Activated CD4-positive, alpha-beta memory T cell treated with anti-CD3 and anti-CD28 coated beads, Interleukin-2, amount 10 ng/mL, durations not matched to agents 7 days and 5 days (primary cell): ENCODE measurements at regions of chr10 and their contacts with region 1.

Region 1: GRCh38 chr10:88270871-88271713 is 312.0 kb downstream of the RNLS start:
- DNase-seq: peak; percentile 75
- H3K4me3 Mint-ChIP-seq: peak overlapping the region; percentile 47
- H3K27ac Mint-ChIP-seq: peak overlapping the region; percentile 91
- H3K4me1 Mint-ChIP-seq: peaks cover 61% of the 10 kb centered on the region
- H3K27me3 Mint-ChIP-seq: no peaks in the 10 kb centered on the region

Region 2: DNA sequence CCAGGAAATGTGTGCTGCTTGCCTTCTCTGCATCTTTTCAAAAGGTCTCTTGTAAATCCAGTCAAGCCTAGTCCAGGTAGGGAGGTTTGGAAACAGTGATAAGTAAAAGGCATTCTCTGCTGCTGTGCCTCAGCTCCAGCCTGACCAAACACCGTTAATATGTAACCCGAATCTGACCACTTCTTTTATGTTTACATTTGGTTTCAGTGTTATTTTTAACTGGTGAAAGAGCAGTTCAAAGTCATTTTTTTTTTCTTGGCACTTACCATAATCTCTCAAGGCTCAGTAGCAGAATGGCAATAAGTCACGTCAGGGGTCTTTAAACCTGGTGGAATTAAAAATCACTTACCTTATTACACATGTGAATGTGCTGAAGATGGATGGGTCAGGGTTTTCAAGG is 190.9 kb before region 1 on chr10:
- CTCF ChIA-PET with region 1: no interaction called
- POLR2A ChIA-PET with region 1: no interaction called
- DNase-seq: no peak
- H3K4me3 Mint-ChIP-seq: no peak overlapping the region
- H3K27ac Mint-ChIP-seq: no peak overlapping the region
- H3K4me1 Mint-ChIP-seq: peaks cover 11% of the 10 kb centered on the region
- H3K27me3 Mint-ChIP-seq: peaks cover 22% of the 10 kb centered on the region

Region 3: DNA sequence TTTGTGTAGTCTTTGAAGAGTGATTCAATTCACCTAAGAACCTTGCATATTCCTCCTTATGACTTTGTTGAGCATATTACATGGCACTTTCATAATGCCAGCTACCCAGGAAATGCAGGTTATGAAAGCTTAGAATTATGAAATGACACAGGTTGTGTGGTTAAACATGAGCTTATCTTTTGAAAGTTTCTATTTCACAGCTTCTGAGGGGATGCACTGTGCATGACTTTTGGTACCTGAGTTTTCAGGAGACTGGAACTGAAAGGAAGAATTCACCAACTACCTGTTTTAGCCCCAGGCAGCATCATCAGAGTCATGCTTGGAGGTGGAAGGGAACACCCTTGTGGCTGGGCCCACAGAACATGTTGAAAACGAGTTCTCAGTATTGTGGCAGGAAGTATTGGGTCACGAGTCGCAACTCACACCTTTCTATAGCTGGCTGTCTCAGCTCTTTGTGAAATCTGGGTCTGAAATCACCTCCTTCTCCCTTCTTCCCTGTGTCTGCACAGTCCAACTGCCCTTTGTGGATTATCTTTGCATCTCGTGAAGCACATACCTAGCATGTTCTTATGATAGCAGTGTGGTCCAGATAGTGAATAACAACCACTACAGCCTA is 179.5 kb before region 1 on chr10:
- CTCF ChIA-PET with region 1: interaction called, 7 read pairs
- POLR2A ChIA-PET with region 1: interaction called, 29 read pairs
- DNase-seq: peak; percentile 85
- H3K4me3 Mint-ChIP-seq: no peak overlapping the region
- H3K27ac Mint-ChIP-seq: peak overlapping the region; percentile 85
- H3K4me1 Mint-ChIP-seq: peaks cover 38% of the 10 kb centered on the region
- H3K27me3 Mint-ChIP-seq: peaks cover 28% of the 10 kb centered on the region

Region 4: GRCh38 chr10:88152720-88153119 is 118.4 kb before region 1 on chr10:
- CTCF ChIA-PET with region 1: interaction called, 3 read pairs
- POLR2A ChIA-PET with region 1: interaction called, 11 read pairs
- DNase-seq: peak; percentile 69
- H3K4me3 Mint-ChIP-seq: no peak overlapping the region
- H3K27ac Mint-ChIP-seq: peak overlapping the region; percentile 78
- H3K4me1 Mint-ChIP-seq: peaks cover 23% of the 10 kb centered on the region
- H3K27me3 Mint-ChIP-seq: no peaks in the 10 kb centered on the region

Region 5: DNA sequence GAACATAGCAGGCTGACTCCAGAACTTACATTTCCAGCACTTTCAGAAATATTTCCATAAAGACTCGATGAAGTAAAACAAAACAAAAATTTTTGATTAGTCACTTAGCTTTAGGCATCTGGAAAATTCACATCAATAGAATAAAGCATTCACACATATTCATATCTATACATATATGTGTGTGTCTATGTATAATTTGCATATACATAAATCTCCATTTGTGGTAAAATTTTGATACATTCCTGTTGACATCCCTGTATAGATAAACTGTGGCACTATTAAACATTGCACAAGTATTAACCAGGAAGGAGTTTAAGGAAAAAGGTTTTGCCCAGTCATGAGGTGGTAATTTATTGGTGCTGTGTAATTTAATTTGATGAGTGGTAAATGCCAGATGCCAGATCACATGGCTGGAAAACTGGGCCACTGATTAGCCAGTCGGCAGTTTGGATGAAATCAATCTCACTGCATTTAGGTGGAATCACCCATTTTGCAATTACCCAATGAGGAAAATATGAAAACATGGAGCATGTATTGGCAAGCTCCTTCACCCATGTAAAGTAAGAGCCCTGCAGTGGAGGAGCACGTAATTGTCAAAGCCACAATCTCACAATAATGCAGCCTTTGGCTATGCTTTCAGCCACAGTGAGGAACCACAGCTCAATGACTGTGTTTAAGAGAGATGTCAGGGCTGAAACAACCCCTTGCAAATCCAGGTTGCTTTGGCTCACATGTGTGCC is 17.4 kb after region 1 on chr10:
- CTCF ChIA-PET with region 1: no interaction called
- POLR2A ChIA-PET with region 1: no interaction called
- DNase-seq: no peak
- H3K4me3 Mint-ChIP-seq: no peak overlapping the region
- H3K27ac Mint-ChIP-seq: no peak overlapping the region
- H3K4me1 Mint-ChIP-seq: peaks cover 10% of the 10 kb centered on the region
- H3K27me3 Mint-ChIP-seq: no peaks in the 10 kb centered on the region

Region 6: DNA sequence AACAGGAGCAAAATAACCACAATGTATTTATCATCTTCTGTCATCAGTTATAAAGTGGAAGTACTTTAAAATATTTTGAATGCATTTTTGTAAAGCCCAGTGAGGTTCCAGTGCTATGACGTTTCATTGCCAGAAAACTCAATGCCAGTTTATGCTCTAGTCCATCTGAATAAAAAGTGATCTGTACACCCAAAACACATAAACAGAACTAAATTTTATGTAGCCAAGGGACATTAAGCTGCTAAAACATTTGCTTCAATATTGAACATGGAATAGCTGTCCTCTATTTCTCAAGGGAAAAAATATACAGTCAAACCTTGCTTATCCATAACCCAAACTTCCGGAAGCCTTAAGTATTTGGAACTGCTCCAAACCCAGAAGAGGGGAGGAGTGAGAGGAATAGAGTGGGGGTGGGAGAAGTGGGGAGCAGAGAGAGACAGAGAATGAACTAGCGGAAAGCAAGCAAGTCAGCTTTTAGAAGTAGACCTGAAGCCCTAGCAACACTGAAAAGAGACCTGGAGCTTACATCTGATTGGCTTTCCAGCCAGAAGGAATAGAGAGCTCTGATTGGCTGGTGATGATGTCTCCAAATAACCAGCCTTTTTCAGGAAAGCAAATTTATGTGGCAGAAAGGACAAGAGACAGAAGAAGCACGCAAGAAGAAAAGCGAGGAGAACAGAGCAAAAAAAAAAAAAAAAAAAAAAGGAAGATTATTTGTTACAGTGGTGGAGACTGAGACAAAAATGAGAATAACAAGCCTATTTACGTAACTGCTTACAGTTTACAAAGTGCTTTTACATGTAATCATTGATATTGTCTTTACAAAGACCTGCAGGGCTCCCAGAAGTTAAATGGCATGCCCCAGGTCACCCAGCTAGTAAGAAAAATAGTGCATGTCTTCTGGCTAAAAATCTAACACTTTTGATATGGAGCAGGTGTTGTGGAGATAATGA is 116.0 kb after region 1 on chr10:
- CTCF ChIA-PET with region 1: interaction called, 50 read pairs
- POLR2A ChIA-PET with region 1: interaction called, 49 read pairs
- DNase-seq: no peak
- H3K4me3 Mint-ChIP-seq: no peak overlapping the region
- H3K27ac Mint-ChIP-seq: no peak overlapping the region
- H3K4me1 Mint-ChIP-seq: peaks cover 27% of the 10 kb centered on the region
- H3K27me3 Mint-ChIP-seq: no peaks in the 10 kb centered on the region

Region 7: GRCh38 chr10:88392222-88392621 is 121.1 kb after region 1 on chr10:
- CTCF ChIA-PET with region 1: interaction called, 50 read pairs
- POLR2A ChIA-PET with region 1: interaction called, 49 read pairs
- DNase-seq: peak; percentile 33
- H3K4me3 Mint-ChIP-seq: no peak overlapping the region
- H3K27ac Mint-ChIP-seq: peak overlapping the region; percentile 13
- H3K4me1 Mint-ChIP-seq: peaks cover 22% of the 10 kb centered on the region
- H3K27me3 Mint-ChIP-seq: no peaks in the 10 kb centered on the region